Activated B cell treated with CpG ODN at 0.5 μM for 24 hours (primary cell): ENCODE measurements at regions of chr6 and their contacts with region 1.

Region 1: GRCh38 chr6:110815217-110816109 is at the start of gene CDK19:
- DNase-seq: peak; percentile 96
- ATAC-seq: peak; percentile 79
- H3K4me3 Mint-ChIP-seq: peak within 1 kb of the TSS; percentile 96
- H3K27ac Mint-ChIP-seq: peak within 1 kb of the TSS; percentile 96
- H3K4me1 Mint-ChIP-seq: peaks cover 44% of the 10 kb centered on the region
- H3K27me3 Mint-ChIP-seq: no peaks in the 10 kb centered on the region
- CTCF ChIP-seq: no peak
- total RNA-seq, gene CDK19: 27.2 and 31.1 TPM in 2 replicates

Region 2: GRCh38 chr6:109095027-109095834 is 1720.2 kb before region 1 on chr6 and contains the start of gene CEP57L1:
- CTCF ChIA-PET with region 1: no interaction called
- POLR2A ChIA-PET with region 1: no interaction called
- intact Hi-C with region 1: loop called (anchors 1 kb)
- DNase-seq: peak; percentile 86
- ATAC-seq: peak; percentile 71
- H3K4me3 Mint-ChIP-seq: peak within 1 kb of the TSS; percentile 97
- H3K27ac Mint-ChIP-seq: peak within 1 kb of the TSS; percentile 100
- H3K4me1 Mint-ChIP-seq: peaks cover 46% of the 10 kb centered on the region
- H3K27me3 Mint-ChIP-seq: no peaks in the 10 kb centered on the region
- CTCF ChIP-seq: no peak
- total RNA-seq, gene CEP57L1: 4.7 and 6.1 TPM in 2 replicates

Region 3: GRCh38 chr6:110179401-110180227 is 635.8 kb before region 1 on chr6 and contains the start of gene WASF1:
- CTCF ChIA-PET with region 1: no interaction called
- POLR2A ChIA-PET with region 1: interaction called, 4 read pairs
- intact Hi-C with region 1: loop called (anchors 1 kb)
- DNase-seq: peak; percentile 92
- ATAC-seq: peak; percentile 80
- H3K4me3 Mint-ChIP-seq: no peak within 1 kb of the TSS
- H3K27ac Mint-ChIP-seq: peak within 1 kb of the TSS; percentile 86
- H3K4me1 Mint-ChIP-seq: peaks cover 7% of the 10 kb centered on the region
- H3K27me3 Mint-ChIP-seq: no peaks in the 10 kb centered on the region
- CTCF ChIP-seq: no peak
- total RNA-seq, gene WASF1: 5.1 and 6.2 TPM in 2 replicates

Region 4: GRCh38 chr6:110784610-110784979 is 30.9 kb before region 1 on chr6:
- CTCF ChIA-PET with region 1: no interaction called
- POLR2A ChIA-PET with region 1: interaction called, 7 read pairs
- intact Hi-C with region 1: loop called (anchors 2 kb)
- DNase-seq: no peak
- ATAC-seq: no peak
- H3K4me3 Mint-ChIP-seq: no peak overlapping the region
- H3K27ac Mint-ChIP-seq: peak overlapping the region; percentile 61
- H3K4me1 Mint-ChIP-seq: peaks cover 38% of the 10 kb centered on the region
- H3K27me3 Mint-ChIP-seq: no peaks in the 10 kb centered on the region
- CTCF ChIP-seq: no peak

Region 5: DNA sequence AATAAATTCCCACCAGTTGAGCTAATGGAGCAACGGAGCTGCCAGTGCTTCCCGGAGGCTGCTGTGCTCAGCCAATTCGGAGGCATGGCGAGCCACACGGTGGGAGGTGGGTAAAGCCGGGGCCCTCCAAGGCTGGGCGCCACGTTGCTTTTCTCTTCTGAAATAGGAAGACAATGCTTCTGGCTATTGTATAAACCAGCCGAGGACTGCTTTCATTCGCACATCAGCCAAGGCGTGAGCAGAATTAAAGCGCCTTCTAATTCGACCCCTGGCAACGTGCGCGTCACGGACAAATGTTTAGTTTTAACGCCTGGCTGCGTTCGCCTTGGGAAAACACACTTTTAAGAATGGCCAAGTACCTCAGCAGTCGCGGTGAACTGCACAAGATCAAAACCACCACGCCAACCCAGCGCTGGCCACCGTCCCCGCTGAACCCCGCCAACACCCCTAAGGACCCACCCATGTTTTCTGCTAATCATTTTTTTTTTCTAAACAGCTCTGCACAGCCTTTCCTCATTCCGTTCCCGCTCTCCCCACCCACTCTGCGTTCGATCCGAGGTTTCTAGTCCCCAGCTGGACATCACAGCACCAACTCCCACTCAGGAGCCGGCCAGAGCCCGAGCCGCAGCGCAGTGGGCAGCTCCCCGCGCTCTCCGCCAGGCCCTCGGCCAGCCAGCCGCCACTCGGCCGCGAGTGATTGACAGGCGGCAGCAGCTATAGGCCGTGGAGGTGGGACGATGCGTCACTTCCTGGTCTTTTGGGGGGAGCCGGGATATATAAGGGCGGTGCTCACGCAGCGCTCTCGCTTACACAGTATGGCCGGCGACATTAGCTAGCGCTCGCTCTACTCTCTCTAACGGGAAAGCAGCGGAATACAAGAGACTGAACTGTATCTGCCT is 58.8 kb after region 1 on chr6 and contains the start of gene AMD1:
- CTCF ChIA-PET with region 1: interaction called, 11 read pairs
- POLR2A ChIA-PET with region 1: interaction called, 530 read pairs
- intact Hi-C with region 1: loop called (anchors 1 kb)
- DNase-seq: peak; percentile 84
- ATAC-seq: peak; percentile 76
- H3K4me3 Mint-ChIP-seq: peak within 1 kb of the TSS; percentile 99
- H3K27ac Mint-ChIP-seq: peak within 1 kb of the TSS; percentile 99
- H3K4me1 Mint-ChIP-seq: peaks cover 43% of the 10 kb centered on the region
- H3K27me3 Mint-ChIP-seq: no peaks in the 10 kb centered on the region
- CTCF ChIP-seq: no peak
- total RNA-seq, gene AMD1: 61.7 and 65.5 TPM in 2 replicates

Region 6: DNA sequence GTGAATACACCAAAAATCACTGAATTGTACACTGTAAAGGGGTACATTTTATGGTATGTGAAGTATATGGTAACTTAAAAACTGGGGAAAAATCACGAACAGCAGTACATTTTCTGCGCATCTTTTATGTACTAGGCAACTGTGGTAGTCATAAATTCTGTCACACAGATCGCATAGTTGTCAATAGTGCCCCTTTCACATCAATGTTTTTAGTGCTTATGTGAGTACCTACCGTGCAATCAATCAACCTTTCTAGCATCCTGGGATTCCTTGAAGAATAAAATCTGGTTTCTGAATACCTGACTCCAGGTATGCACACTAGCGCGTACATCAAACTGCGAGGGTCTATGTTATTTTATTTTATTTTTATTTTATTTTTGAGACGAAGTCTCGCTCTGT is 165.7 kb after region 1 on chr6:
- CTCF ChIA-PET with region 1: no interaction called
- POLR2A ChIA-PET with region 1: interaction called, 11 read pairs
- intact Hi-C with region 1: loop called (anchors 1 kb)
- DNase-seq: no peak
- ATAC-seq: no peak
- H3K4me3 Mint-ChIP-seq: peak overlapping the region; percentile 95
- H3K27ac Mint-ChIP-seq: peak overlapping the region; percentile 98
- H3K4me1 Mint-ChIP-seq: peaks cover 37% of the 10 kb centered on the region
- H3K27me3 Mint-ChIP-seq: no peaks in the 10 kb centered on the region
- CTCF ChIP-seq: no peak

Region 7: DNA sequence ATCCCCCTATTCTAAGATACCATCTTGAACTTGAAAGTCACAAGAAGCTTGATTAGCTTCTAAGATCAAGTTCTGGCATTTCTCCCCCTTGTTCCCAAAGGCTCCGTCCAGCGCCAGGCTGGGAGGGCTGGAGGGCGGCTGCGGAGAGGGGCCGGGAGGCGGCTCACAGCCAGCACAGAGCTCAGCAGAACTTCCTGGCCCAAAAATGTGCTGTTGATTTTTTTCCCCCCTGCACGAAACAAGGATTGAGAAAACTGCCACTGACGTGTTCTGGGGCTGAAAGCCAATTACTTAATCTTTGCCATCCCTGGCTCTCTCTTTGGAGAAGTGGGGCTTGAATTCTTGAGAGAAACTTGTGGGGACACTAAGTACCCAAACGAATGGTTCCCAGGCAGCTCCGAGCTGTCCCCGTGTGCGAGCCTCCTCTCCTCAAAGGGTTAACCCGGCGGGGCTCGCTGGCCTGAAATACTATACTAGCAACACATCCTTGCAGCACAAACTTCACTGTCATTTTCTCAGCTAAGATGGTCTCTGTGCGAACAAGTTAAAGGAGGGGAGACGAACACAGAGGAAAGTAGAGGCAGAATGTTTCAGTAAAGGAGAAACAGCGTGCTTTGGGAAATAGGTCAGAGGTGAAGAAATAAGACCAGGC is 789.8 kb after region 1 on chr6:
- CTCF ChIA-PET with region 1: no interaction called
- POLR2A ChIA-PET with region 1: no interaction called
- intact Hi-C with region 1: loop called (anchors 10 kb)
- DNase-seq: peak; percentile 23
- ATAC-seq: peak; percentile 43
- H3K4me3 Mint-ChIP-seq: peak overlapping the region; percentile 90
- H3K27ac Mint-ChIP-seq: peak overlapping the region; percentile 92
- H3K4me1 Mint-ChIP-seq: peaks cover 44% of the 10 kb centered on the region
- H3K27me3 Mint-ChIP-seq: no peaks in the 10 kb centered on the region
- CTCF ChIP-seq: no peak

Region 8: GRCh38 chr6:112251171-112251875 is 1435.9 kb after region 1 on chr6:
- CTCF ChIA-PET with region 1: no interaction called
- POLR2A ChIA-PET with region 1: no interaction called
- intact Hi-C with region 1: no loop called
- DNase-seq: no peak
- ATAC-seq: no peak
- H3K4me3 Mint-ChIP-seq: no peak overlapping the region
- H3K27ac Mint-ChIP-seq: no peak overlapping the region
- H3K4me1 Mint-ChIP-seq: peaks cover 15% of the 10 kb centered on the region
- H3K27me3 Mint-ChIP-seq: peaks cover 36% of the 10 kb centered on the region
- CTCF ChIP-seq: no peak